ENCODE measurements at regions of chr9 and their contacts with region 1.

Region 1: DNA sequence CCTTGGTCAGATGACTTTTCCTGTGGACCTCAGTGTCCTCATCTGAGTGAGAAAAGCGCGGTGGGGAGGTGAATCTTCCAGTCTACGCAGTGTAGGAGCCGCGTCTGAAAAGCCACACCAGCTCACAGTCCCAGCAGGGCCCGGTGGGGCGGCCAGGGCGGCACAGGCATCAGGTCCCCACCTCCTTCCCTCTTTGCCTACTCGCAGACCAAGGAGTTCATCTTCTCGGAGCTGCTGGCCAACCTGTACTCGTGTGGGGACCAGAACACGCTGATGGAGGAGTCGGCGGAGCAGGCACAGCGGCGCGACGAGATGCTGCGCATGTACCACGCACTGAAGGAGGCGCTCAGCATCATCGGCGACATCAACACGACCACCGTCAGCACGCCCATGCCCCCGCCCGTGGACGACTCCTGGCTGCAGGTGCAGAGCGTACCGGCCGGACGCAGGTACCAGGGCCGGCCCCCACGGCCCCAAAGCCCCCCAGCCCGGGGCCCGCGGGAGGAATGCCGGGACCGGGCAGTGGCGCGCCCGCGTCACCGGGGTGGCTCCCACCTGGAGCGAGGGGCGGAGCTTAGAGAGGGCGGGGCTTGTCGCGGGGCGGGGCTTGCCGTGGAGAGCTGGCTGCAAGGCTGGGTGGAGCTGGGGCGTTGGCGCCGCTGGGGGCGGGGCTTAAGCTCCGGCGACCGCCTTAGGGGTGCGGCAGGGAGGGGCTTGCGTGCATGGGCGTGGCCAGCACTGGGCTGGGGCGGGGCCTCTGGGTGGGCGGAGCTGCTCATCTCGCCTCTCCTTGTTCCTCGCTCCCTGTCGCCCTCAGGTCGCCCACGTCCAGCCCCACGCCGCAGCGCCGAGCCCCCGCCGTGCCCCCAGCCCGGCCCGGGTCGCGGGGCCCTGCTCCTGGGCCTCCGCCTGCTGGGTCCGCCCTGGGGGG is 25.6 kb downstream of the GOLGA2 start:
- DNase-seq: peak; percentile 93
- H3K4me3 Mint-ChIP-seq: peak overlapping the region; percentile 76
- H3K27ac Mint-ChIP-seq: no peak overlapping the region
- H3K4me1 Mint-ChIP-seq: peaks cover 8% of the 10 kb centered on the region
- H3K27me3 Mint-ChIP-seq: peaks cover 28% of the 10 kb centered on the region

Region 2: DNA sequence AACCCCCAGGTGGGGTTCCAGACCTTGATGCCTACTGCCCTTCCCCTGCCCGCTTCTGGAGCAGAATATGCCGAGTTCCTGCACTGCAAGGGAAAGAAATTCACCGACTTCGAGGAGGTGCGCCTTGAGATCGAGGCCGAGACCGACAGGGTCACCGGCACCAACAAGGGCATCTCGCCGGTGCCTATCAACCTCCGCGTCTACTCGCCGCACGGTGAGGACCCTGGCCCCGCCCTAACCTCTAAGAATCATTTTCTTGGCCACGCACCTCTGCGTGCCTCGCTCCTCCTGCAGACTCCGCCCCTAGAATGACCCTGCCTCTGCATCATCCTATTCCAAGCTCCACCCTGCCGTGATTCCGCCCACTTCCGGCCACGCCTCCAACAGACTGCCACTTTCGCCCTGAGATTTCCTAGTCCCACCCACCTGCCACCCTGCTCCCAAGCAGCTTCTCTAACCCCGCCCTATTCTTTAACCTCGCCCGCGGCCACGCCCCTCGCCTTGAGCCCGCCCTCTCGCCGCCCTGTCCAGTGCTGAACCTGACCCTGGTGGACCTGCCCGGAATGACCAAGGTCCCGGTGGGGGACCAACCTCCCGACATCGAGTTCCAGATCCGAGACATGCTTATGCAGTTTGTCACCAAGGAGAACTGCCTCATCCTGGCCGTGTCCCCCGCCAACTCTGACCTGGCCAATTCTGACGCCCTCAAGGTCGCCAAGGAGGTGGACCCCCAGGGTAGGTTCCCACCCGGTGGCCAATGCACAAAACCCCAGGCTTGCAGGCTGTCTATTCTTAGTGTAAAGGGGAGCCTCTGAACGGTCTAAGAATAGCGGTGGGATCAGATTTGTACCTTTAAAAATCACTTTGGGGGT is 31.4 kb before region 1 on chr9:
- intact Hi-C with region 1: loop called (anchors 1 kb)
- DNase-seq: peak; percentile 94
- H3K4me3 Mint-ChIP-seq: peak overlapping the region; percentile 77
- H3K27ac Mint-ChIP-seq: peak overlapping the region; percentile 26
- H3K4me1 Mint-ChIP-seq: peaks cover 11% of the 10 kb centered on the region
- H3K27me3 Mint-ChIP-seq: no peaks in the 10 kb centered on the region

Region 3: GRCh38 chr9:128275996-128276573 is 25.9 kb after region 1 on chr9 and contains the starts of genes GOLGA2 and SWI5:
- intact Hi-C with region 1: loop called (anchors 1 kb)
- DNase-seq: peak; percentile 100
- H3K4me3 Mint-ChIP-seq: peak within 1 kb of the TSS; percentile 97
- H3K27ac Mint-ChIP-seq: peak within 1 kb of the TSS; percentile 89
- H3K4me1 Mint-ChIP-seq: peaks cover 40% of the 10 kb centered on the region
- H3K27me3 Mint-ChIP-seq: no peaks in the 10 kb centered on the region
- total RNA-seq, gene GOLGA2: 44.0 and 47.9 TPM in 2 replicates
- total RNA-seq, gene SWI5: 13.5 and 13.7 TPM in 2 replicates

Region 4: DNA sequence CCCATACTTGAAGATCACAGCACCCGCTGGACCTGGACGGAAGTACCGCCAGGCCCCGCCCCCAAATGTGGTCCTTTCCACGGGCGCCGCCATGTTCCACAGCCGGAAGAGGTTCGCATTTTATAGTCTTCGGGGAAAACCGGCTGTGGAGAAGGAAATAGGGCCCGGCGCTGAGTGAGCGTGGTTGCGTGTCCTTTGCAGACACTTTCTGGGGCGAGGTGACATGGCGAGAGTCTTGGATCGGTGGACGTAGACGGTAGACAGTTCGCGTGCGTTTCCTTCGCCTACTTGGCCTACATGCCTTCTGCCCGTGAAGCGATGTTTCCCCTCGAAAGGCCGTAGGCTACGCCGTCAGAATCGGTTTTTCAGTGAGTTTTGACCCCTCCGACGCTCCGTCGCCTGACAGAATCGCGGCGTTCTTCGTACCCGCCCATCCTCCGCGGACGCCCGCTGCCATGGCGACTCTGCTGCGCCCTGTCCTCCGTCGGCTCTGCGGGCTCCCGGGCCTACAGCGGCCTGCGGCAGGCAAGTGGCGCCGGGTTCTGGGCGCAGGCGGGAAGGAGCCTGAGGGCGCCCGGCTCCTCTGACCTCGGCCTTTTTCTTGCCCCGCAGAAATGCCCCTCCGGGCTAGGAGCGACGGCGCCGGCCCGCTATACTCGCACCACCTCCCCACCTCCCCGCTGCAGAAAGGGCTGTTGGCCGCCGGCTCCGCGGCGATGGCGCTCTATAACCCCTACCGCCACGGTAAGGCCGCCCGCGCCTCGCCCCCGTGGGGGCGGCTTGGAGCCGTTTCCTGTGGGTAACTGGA is 72.4 kb after region 1 on chr9 and contains the starts of genes COQ4 and TRUB2:
- intact Hi-C with region 1: loop called (anchors 2 kb)
- DNase-seq: peak; percentile 90
- H3K4me3 Mint-ChIP-seq: peak within 1 kb of the TSS; percentile 99
- H3K27ac Mint-ChIP-seq: peak within 1 kb of the TSS; percentile 99
- H3K4me1 Mint-ChIP-seq: peaks cover 11% of the 10 kb centered on the region
- H3K27me3 Mint-ChIP-seq: no peaks in the 10 kb centered on the region
- total RNA-seq, gene COQ4: 49.6 and 52.2 TPM in 2 replicates
- total RNA-seq, gene TRUB2: 33.5 and 36.1 TPM in 2 replicates